Calu3 (cell line): ENCODE measurements at regions of chr6 and their contacts with region 1.

Region 1: GRCh38 chr6:131949909-131950766 is 1.0 kb downstream of the CCN2 start:
- DNase-seq: peak; percentile 80
- H3K4me3 Mint-ChIP-seq: peak overlapping the region; percentile 85
- H3K27ac Mint-ChIP-seq: peak overlapping the region; percentile 94
- H3K4me1 Mint-ChIP-seq: peaks cover 54% of the 10 kb centered on the region
- H3K27me3 Mint-ChIP-seq: no peaks in the 10 kb centered on the region
- CTCF ChIP-seq: no peak

Region 2: DNA sequence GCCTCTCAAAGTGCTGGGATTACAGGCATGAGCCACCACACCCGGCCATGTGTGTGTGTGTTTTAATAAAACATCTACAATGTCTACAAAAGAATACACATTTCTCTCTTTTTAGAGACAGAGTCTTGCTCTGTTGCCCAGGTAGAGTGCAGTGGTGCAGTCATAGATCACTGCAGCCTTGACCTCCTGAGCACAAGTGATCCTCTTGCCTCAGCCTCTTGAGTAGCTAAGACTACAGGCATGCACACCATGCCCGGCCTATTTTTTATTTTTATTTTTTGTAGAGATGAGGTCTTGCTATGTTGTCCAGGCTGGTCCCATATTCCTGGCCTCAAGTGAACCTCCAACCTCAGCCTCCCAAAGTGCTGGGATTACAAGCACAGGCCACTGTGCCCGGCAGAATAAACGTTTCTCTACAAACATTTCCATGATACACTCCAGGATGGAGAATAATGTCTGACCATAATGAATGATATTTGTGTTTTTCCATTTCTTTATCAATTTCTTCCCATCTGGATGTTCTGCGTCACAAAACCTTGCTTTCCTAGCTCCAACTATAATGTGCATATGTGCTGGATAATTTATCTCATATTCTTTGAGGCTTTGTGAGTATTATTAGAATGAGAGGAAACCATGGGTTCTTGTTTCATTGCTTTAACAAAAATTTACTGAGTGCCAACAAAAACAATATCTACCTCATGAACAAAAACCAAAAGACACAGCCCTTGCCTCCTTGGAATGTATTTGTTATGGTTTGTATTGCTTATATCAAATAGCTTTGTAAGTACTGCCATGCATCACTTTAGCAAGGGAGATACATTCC is 29.6 kb after region 1 on chr6:
- CTCF ChIA-PET with region 1: interaction called, 8 read pairs
- intact Hi-C with region 1: loop called (anchors 2 kb)
- DNase-seq: no peak
- H3K4me3 Mint-ChIP-seq: no peak overlapping the region
- H3K27ac Mint-ChIP-seq: peak overlapping the region; percentile 89
- H3K4me1 Mint-ChIP-seq: peaks cover 50% of the 10 kb centered on the region
- H3K27me3 Mint-ChIP-seq: no peaks in the 10 kb centered on the region
- CTCF ChIP-seq: no peak

Region 3: DNA sequence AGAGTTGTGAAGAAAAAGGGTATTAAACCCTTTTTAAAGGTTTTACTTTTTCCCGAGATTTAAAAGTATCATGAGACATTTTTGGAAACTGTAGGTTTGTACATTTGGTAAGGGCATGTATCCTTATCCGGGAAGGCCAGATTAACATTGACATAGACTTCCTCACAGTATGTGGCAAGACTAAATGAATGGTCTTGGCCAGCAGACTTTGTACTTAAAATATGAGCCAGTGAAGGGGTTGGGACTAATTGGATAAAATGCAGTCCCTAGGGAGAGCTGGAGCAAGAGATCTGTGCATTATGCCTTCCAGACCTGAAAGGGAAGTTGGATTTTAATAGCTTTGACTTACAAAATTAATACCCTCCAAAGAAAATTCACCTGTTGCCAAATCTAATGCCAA is 61.4 kb after region 1 on chr6:
- CTCF ChIA-PET with region 1: no interaction called
- intact Hi-C with region 1: no loop called
- DNase-seq: no peak
- H3K4me3 Mint-ChIP-seq: no peak overlapping the region
- H3K27ac Mint-ChIP-seq: no peak overlapping the region
- H3K4me1 Mint-ChIP-seq: no peaks in the 10 kb centered on the region
- H3K27me3 Mint-ChIP-seq: no peaks in the 10 kb centered on the region
- CTCF ChIP-seq: no peak

Region 4: GRCh38 chr6:132167929-132168892 is 218.1 kb after region 1 on chr6:
- CTCF ChIA-PET with region 1: interaction called, 8 read pairs
- intact Hi-C with region 1: loop called (anchors 2 kb)
- DNase-seq: peak; percentile 47
- H3K4me3 Mint-ChIP-seq: peak overlapping the region; percentile 32
- H3K27ac Mint-ChIP-seq: peak overlapping the region; percentile 82
- H3K4me1 Mint-ChIP-seq: peaks cover 12% of the 10 kb centered on the region
- H3K27me3 Mint-ChIP-seq: no peaks in the 10 kb centered on the region
- CTCF ChIP-seq: no peak